AG04449 (cell line): ENCODE measurements at regions of chr1 and their contacts with region 1.

Region 1: GRCh38 chr1:204806943-204807687 is 63.5 kb upstream of the NFASC start:
- DNase-seq: no peak
- H3K4me3 ChIP-seq: peak overlapping the region; percentile 59
- CTCF ChIP-seq: peak; percentile 99

Region 2: DNA sequence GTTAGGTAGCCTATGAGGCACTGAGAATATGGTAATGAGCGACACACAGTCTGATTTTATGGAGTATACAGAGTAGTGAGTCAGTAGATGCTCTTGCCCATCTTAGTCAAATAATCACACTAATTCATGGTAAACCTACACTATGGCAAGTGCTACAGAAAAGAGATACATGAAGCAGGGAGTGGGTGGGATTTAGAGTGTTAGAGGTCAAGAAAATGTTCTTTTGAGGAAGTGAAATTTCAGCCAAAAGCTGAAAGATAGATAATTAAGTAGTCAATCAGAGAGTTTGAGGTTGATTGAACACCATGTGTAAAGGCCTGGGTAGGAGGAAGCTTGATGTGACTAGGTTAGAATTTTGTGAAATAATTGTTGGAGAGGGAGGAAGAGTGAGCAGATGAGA is 276.2 kb before region 1 on chr1:
- CTCF ChIA-PET with region 1: interaction called, 20 read pairs
- POLR2A ChIA-PET with region 1: no interaction called
- DNase-seq: no peak
- H3K4me3 ChIP-seq: no peak overlapping the region
- CTCF ChIP-seq: no peak

Region 3: DNA sequence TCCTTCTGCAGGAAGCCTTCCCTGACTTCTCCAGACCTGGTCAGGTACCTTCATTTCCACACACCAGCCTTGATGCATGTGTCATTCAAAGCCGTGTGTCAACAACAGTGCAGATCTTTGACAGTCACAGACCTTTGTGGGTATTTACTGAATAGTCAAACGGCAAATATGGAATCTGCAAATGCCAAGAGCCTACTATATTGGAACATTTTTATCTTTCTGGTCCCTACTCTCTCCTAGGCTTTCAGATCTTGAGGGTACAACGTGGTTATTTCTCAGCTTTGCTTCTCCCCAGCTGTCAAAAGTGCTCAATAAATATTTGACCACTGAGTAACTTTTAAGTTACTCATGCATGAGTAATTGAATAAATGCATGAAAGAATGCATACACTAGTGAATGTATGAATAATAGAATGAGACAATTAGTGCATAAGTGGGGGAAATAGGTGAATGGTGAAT is 215.5 kb before region 1 on chr1:
- CTCF ChIA-PET with region 1: interaction called, 17 read pairs
- POLR2A ChIA-PET with region 1: no interaction called
- DNase-seq: no peak
- H3K4me3 ChIP-seq: no peak overlapping the region
- CTCF ChIP-seq: no peak

Region 4: DNA sequence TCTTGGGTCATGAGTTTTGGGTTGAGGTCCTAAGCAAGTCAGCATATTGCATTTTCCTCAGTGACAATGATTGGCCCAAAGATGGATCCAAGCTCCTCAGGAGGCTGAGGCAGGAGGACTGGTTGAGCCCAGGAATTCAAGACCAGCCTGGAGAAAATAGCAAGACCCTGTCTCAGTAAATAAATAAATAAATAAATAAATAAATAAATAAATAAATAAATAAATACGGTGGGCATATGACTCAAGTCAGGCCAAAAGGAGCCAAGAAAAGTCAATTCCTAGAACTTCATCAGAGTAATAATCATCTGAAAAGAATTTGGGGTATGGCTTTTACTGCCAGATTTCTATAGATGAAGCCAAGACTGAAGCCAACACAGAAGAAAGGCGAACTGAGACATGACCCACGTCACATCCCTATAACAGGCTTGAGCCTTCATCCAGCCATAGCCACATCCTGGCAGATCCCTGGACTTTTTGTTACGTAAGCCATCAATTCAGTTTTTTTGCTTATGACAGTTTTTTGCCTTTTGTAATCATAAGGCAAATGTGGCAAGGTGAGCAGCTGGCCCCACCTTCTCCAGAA is 24.9 kb before region 1 on chr1:
- CTCF ChIA-PET with region 1: interaction called, 14 read pairs
- POLR2A ChIA-PET with region 1: no interaction called
- DNase-seq: no peak
- H3K4me3 ChIP-seq: no peak overlapping the region
- CTCF ChIP-seq: no peak

Region 5: DNA sequence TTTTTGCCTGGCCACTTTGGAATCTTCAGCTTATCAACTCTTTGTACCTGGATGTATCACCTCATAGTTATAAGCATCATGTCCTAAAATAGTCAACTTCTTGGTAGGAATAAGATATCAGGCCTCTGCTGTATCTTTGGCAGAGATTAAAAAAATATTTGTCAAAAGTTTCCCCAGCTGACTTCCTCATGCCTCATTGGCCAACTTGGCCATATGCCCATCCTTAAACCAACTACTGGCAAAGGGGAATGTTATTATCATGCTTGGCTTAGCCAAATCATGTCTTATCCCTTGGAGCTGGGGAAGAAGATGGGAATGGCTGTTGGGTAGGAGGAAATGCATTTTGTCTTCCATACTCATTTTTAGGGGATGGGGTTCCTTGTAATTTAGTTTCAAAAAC is 86.9 kb after region 1 on chr1:
- CTCF ChIA-PET with region 1: interaction called, 13 read pairs
- POLR2A ChIA-PET with region 1: no interaction called
- DNase-seq: no peak
- H3K4me3 ChIP-seq: no peak overlapping the region
- CTCF ChIP-seq: no peak

Region 6: GRCh38 chr1:204950353-204951001 is 143.4 kb after region 1 on chr1:
- CTCF ChIA-PET with region 1: interaction called, 320 read pairs
- POLR2A ChIA-PET with region 1: no interaction called
- DNase-seq: no peak
- H3K4me3 ChIP-seq: no peak overlapping the region
- CTCF ChIP-seq: no peak